GM10248 (cell line): ENCODE measurements at regions of chr12 and their contacts with region 1.

Region 1: GRCh38 chr12:14239350-14239934 is 126.0 kb upstream of the ATF7IP start:
- DNase-seq: peak; percentile 47
- CTCF ChIP-seq: no peak

Region 2: DNA sequence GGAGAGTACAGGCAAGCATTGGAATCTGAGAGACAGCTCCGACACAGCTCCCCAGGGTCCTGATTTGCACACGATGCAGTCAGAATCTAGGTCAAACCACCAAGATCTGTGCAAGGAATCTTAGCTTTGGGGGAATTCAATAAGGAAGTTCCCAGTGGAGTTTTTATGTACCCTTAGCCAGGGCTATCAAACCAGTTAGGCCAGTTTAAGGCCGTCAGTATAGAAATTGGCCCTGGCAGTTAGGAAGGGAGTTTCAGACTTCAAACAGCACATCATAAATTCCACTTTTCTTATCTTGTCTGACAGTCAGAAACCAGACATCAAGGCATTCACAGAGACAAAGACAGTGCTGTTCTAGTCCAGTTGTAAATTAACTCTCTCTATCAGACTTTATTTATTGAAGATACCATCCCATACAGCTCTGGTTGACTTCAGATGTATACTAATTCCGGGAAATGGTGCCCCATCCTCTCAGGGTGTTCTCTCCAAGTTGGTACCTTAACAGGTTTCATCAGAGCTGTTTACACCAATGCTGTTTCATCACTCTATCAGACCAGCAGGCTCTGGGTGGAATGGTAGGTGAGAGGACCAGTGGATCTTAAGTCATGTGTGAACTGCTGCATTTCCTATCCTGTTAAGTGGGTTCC is 31.4 kb before region 1 on chr12:
- CTCF ChIA-PET with region 1: no interaction called
- POLR2A ChIA-PET with region 1: no interaction called
- DNase-seq: no peak
- CTCF ChIP-seq: no peak

Region 3: GRCh38 chr12:14225064-14225463 is 14.4 kb before region 1 on chr12:
- CTCF ChIA-PET with region 1: interaction called, 13 read pairs
- POLR2A ChIA-PET with region 1: no interaction called
- DNase-seq: no peak
- CTCF ChIP-seq: no peak

Region 4: GRCh38 chr12:14454098-14454907 is 214.9 kb after region 1 on chr12:
- CTCF ChIA-PET with region 1: interaction called, 11 read pairs
- POLR2A ChIA-PET with region 1: no interaction called
- DNase-seq: peak; percentile 52
- CTCF ChIP-seq: peak; percentile 56

Region 5: DNA sequence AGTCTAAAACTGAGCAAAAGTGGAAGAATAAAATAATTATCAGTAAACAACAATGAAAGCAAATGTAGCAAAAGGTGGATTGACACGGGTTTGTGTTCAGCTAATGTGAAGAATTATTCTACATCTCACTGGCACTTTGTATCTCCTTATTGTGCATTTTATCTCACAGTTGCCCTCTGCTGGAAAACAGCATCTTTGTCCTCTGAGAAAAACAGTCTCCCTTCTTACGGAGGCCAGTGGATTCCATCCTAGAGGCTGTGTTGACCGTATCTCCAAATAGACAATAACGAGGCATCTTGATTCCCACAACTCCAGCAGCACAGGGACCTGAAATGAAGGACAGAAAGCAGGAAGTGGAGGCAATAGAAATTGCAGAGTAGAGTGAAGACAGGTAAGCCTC is 379.5 kb after region 1 on chr12:
- CTCF ChIA-PET with region 1: interaction called, 17 read pairs
- POLR2A ChIA-PET with region 1: no interaction called
- DNase-seq: no peak
- CTCF ChIP-seq: no peak

Region 6: DNA sequence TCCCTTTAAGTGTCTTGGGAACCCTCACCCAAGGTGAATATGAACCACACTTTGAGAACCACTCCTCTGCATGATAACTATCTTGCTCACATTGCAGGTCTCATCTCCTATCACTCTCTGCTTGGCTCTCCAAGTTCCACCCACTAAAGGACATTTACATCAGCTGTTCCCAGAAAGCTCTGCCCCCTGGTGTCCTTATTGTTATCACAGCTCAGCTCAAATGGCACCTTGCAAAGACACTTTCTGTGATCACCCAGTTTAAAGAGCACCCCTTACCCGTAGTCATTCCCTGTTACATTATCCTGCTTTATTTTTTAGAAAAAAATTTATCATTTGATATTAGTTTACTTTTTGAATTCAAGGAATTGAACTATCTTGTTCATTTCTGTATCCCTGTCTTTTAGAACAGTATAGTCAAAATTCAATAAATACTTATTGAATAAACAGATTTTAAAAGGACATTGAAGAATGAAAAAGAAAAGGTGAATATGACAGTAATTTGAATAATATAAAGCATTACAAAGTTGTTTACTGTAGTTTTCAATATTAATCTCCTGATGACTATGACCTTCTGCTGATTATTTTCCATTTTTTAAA is 477.5 kb after region 1 on chr12:
- CTCF ChIA-PET with region 1: interaction called, 16 read pairs
- POLR2A ChIA-PET with region 1: no interaction called
- DNase-seq: peak; percentile 59
- CTCF ChIP-seq: peak; percentile 49